ENCODE measurements at regions of chr2 and their contacts with region 1.

Region 1: DNA sequence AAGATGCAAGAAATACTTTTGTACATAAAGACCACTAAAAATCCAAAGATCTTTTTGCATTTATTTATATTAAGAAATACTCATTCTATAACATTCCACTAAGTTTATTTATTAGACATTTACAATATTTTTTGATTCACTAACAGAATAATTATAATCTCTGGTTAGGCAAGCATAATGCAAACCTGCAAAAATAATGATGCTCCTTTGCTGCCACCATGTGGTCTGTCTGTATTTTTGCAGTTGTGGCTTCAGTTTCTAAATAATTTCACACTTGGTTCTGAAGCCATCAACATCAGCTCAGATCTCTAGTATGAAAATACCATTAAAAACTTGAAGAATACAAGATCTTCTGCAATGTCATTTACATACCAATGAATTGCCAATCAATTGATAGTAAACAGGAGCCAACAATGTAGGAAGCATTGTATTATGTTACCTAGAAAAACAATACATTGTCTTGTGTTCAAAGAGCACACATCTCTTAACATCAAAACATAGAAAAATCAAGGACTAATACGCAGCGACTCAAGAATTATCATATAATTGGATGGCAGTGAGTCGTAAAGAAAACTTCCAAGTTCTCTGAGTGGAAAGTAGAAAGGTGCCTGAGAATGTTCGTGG is 28.8 kb upstream of the WDR75 start:
- DNase-seq: peak in 1 of 2 experiments; percentile 3
- H3K4me3 ChIP-seq: no peak overlapping the region
- H3K27ac ChIP-seq: no peak overlapping the region
- H3K4me1 ChIP-seq: 0 out of 2 replicates have a peak, but pooled peaks cover 4% of the 10 kb centered on the region
- H3K27me3 ChIP-seq: no peaks in the 10 kb centered on the region
- CTCF ChIP-seq: peak; percentile 74

Region 2: GRCh38 chr2:189096769-189097447 is 315.5 kb before region 1 on chr2:
- CTCF ChIA-PET with region 1: no interaction called
- POLR2A ChIA-PET with region 1: no interaction called
- intact Hi-C with region 1: loop called (anchors 1 kb)
- DNase-seq: peak; percentile 8 to 62
- H3K4me3 ChIP-seq: no peak overlapping the region
- H3K27ac ChIP-seq: no peak overlapping the region
- H3K4me1 ChIP-seq: no peaks in the 10 kb centered on the region
- H3K27me3 ChIP-seq: no peaks in the 10 kb centered on the region
- CTCF ChIP-seq: no peak

Region 3: DNA sequence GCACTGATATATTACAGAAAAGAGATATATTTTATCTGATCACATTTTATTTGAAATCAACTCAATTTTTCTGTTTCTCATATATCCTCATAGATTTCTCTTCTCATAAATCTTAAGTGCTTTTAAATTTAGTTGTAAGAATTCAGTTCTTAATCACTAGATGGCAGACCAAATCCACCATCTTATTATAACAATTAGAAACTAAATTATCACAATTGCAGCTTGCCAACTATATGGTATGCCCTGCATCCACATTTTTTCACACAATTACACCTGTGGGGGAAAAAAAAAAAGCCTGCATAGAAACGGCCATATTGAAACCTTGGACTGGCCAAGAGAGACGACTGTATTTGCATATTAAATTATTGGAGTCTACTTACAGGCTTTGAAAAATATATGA is 297.3 kb before region 1 on chr2:
- CTCF ChIA-PET with region 1: no interaction called
- POLR2A ChIA-PET with region 1: no interaction called
- intact Hi-C with region 1: loop called (anchors 5 kb)
- DNase-seq: no peak
- H3K4me3 ChIP-seq: no peak overlapping the region
- H3K27ac ChIP-seq: no peak overlapping the region
- H3K4me1 ChIP-seq: no peaks in the 10 kb centered on the region
- H3K27me3 ChIP-seq: no peaks in the 10 kb centered on the region
- CTCF ChIP-seq: peak; percentile 46; the same call in 1 of the 2 replicates

Region 4: DNA sequence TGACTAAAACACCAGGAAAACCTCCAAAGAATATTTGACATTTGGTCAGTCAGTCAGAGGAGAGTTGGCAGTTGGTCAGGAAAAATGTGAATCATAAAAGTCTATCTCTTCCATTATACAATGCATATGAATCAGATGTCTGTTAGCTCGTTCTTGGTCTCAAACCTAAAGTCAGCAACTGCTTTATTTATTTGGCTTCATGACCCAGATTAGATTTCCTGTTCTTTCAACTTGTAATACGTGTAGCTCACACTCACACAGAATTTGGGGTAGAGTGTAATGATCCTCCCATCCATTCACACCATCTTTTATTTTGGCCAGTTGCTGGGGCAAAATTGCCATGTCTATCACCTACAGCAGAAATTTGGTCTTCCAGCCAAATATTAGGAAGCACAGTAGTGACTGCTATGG is 151.0 kb before region 1 on chr2:
- CTCF ChIA-PET with region 1: no interaction called
- POLR2A ChIA-PET with region 1: no interaction called
- intact Hi-C with region 1: no loop called
- DNase-seq: no peak
- H3K4me3 ChIP-seq: no peak overlapping the region
- H3K27ac ChIP-seq: no peak overlapping the region
- H3K4me1 ChIP-seq: no peaks in the 10 kb centered on the region
- H3K27me3 ChIP-seq: no peaks in the 10 kb centered on the region
- CTCF ChIP-seq: no peak

Region 5: GRCh38 chr2:189287982-189288521 is 124.4 kb before region 1 on chr2:
- CTCF ChIA-PET with region 1: no interaction called
- POLR2A ChIA-PET with region 1: no interaction called
- intact Hi-C with region 1: loop called (anchors 5 kb)
- DNase-seq: no peak
- H3K4me3 ChIP-seq: no peak overlapping the region
- H3K27ac ChIP-seq: no peak overlapping the region
- H3K4me1 ChIP-seq: no peaks in the 10 kb centered on the region
- H3K27me3 ChIP-seq: no peaks in the 10 kb centered on the region
- CTCF ChIP-seq: peak; percentile 58; the same call in 1 of the 2 replicates

Region 6: DNA sequence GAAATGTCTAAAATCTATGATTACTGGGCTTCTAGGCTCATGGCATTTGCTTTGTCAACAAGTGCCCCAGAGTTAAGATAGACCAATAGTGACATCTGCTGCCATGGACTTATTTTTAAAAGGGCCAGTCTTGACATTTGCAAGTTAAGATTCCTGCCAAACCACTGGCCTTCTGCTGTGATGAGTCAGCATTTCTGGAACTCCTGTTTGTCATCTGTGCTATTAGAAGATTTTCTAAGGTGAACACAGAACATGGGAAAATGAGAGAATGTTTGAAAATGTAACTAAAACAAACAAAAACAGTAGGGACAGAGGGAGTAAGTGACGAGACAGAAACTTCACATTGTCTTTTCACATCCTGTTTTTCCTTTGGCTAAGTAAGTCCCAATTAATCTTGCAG is 64.9 kb before region 1 on chr2:
- CTCF ChIA-PET with region 1: no interaction called
- POLR2A ChIA-PET with region 1: no interaction called
- intact Hi-C with region 1: loop called (anchors 1 kb)
- DNase-seq: peak; percentile 18 to 41
- H3K4me3 ChIP-seq: no peak overlapping the region
- H3K27ac ChIP-seq: no peak overlapping the region
- H3K4me1 ChIP-seq: no peaks in the 10 kb centered on the region
- H3K27me3 ChIP-seq: no peaks in the 10 kb centered on the region
- CTCF ChIP-seq: no peak

Region 7: GRCh38 chr2:189379287-189379630 is 33.2 kb before region 1 on chr2:
- CTCF ChIA-PET with region 1: no interaction called
- POLR2A ChIA-PET with region 1: no interaction called
- intact Hi-C with region 1: no loop called
- DNase-seq: peak in 1 of 2 experiments; percentile 75
- H3K4me3 ChIP-seq: no peak overlapping the region
- H3K27ac ChIP-seq: peak overlapping the region; percentile 64
- H3K4me1 ChIP-seq: peaks cover 19% of the 10 kb centered on the region; the same call in 1 of the 2 replicates
- H3K27me3 ChIP-seq: no peaks in the 10 kb centered on the region
- CTCF ChIP-seq: no peak

Region 8: DNA sequence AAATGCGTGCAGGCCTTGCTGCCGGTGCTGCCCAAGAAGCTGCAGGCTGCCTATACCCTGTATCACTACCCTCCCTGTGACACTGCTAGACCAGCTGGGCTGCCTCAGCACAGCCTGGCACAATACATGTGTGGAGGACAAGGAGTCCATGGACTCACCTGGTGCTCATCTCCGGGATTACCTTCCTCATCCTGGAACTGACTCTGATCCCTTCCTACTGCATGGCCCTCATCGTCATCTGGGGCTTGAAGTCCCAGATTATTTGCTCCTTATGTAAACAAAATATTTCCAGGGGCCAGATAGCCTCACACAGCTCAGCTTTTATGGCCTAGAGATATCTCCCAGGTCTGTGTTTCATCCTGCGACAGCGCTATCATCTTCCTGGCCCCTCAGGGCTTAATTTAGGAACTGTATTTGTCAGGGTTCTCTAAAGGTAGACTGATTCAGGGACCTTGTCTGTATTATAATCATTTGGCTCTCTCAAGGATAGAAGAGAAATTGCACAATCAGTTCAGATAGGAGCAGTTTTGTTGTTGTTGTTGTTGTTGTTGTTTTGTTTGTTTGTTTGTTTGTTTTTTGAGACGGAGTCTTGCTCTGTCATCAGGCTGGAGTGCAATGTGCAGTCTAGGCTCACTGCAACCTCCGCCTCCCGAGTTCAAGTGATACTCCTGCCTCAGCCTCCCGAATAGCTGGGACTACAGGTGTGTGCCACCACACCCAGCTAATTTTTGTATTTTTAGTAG is 71.7 kb after region 1 on chr2:
- CTCF ChIA-PET with region 1: no interaction called
- POLR2A ChIA-PET with region 1: no interaction called
- intact Hi-C with region 1: no loop called
- DNase-seq: no peak
- H3K4me3 ChIP-seq: no peak overlapping the region
- H3K27ac ChIP-seq: no peak overlapping the region
- H3K4me1 ChIP-seq: peaks cover 12% of the 10 kb centered on the region
- H3K27me3 ChIP-seq: no peaks in the 10 kb centered on the region
- CTCF ChIP-seq: no peak